H1 (cell line): ENCODE measurements at regions of chr5 and their contacts with region 1.

Region 1: GRCh38 chr5:172059661-172060100 is 53.2 kb upstream of the FBXW11 start:
- DNase-seq: peak in 1 of 2 experiments; percentile 64
- H3K4me3 ChIP-seq: no peak overlapping the region
- H3K27ac ChIP-seq: no peak overlapping the region
- H3K4me1 ChIP-seq: peaks cover 0 to 5% (median 0%) of the 10 kb centered on the region in 4 experiments; a peak in 4 of 7 replicates
- H3K27me3 ChIP-seq: no peaks in the 10 kb centered on the region
- CTCF ChIP-seq: peak; percentile 34 to 77 (median 71)
- EP300 ChIP-seq: no peak
- POLR2A ChIP-seq: no peak
- RAD21 ChIP-seq: peak; percentile 91 to 93

Region 2: GRCh38 chr5:171676286-171676944 is 383.3 kb before region 1 on chr5:
- CTCF ChIA-PET with region 1: no interaction called
- POLR2A ChIA-PET with region 1: no interaction called
- DNase-seq: peak in 1 of 2 experiments; percentile 17
- H3K4me3 ChIP-seq: no peak overlapping the region
- H3K27ac ChIP-seq: no peak overlapping the region
- H3K4me1 ChIP-seq: no peaks in the 10 kb centered on the region; a peak in 1 of 7 replicates
- H3K27me3 ChIP-seq: peaks cover 0 to 3% (median under 1%) of the 10 kb centered on the region in 4 experiments; a peak in 1 of 7 replicates
- CTCF ChIP-seq: no peak
- EP300 ChIP-seq: no peak
- POLR2A ChIP-seq: no peak
- RAD21 ChIP-seq: no peak

Region 3: DNA sequence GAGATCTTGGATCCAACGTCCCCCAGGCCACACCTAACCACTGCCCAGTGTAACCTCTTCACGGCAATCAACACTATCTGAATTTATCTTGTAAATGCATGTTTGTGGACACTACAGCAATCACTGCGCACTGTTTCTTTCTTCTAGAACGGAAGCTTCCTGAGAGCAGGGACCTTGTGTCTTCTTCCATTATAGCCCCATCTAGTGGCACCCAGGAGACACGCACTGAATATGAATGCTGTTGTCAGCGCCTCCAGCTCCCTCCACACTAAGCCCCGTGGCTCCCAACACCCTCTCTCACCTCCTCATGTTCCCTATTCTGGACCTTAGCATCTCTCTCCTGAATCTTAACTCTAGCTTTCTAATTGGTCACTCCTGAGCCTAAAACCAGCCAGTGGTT is 201.4 kb before region 1 on chr5:
- CTCF ChIA-PET with region 1: interaction called, 23 read pairs
- POLR2A ChIA-PET with region 1: no interaction called
- DNase-seq: no peak
- H3K4me3 ChIP-seq: no peak overlapping the region
- H3K27ac ChIP-seq: no peak overlapping the region
- H3K4me1 ChIP-seq: peaks cover 0 to 5% (median 2%) of the 10 kb centered on the region in 4 experiments; a peak in 5 of 7 replicates
- H3K27me3 ChIP-seq: no peaks in the 10 kb centered on the region
- CTCF ChIP-seq: peak; percentile 64 to 89 (median 73)
- EP300 ChIP-seq: no peak
- POLR2A ChIP-seq: peak in 1 of 2 experiments; percentile 10; a peak in 1 of 3 replicates
- RAD21 ChIP-seq: peak; percentile 69 to 70

Region 4: DNA sequence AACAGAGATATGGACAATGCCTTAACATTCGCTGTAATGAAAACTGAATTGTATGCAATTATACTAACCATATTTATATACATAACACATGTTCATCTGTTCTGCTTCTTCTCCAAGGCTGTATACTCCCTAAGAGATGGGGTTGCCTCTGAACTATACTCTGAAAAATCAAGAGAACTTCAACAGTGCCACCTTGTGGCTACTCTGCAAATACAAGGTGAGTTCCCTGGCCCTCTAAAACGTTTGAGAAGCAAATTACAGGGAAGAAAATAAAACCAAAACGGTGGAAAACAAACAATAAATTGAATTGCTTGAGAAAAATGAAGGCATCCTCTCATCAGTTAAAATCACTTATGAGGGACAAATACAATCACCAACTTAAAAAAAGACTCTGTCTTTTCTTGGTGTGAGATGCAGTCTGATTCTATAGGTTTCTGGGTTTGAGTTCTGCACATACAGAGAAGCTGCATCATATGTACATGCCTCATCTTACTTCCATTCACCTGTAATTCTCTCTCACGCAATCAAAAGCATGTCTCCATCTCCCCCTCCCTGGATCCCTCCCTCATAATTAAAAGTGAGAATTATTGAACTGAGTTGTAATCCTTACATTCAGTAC is 151.8 kb before region 1 on chr5:
- CTCF ChIA-PET with region 1: interaction called, 40 read pairs
- POLR2A ChIA-PET with region 1: no interaction called
- DNase-seq: no peak
- H3K4me3 ChIP-seq: no peak overlapping the region
- H3K27ac ChIP-seq: no peak overlapping the region
- H3K4me1 ChIP-seq: peaks cover 0 to 4% (median 2%) of the 10 kb centered on the region in 4 experiments; a peak in 3 of 7 replicates
- H3K27me3 ChIP-seq: no peaks in the 10 kb centered on the region
- CTCF ChIP-seq: peak in 2 of 3 experiments; percentile 60 to 73; a peak in 3 of 4 replicates
- EP300 ChIP-seq: no peak
- POLR2A ChIP-seq: no peak
- RAD21 ChIP-seq: peak; percentile 67 to 74

Region 5: GRCh38 chr5:172044631-172045314 is 14.9 kb before region 1 on chr5:
- CTCF ChIA-PET with region 1: interaction called, 51 read pairs
- POLR2A ChIA-PET with region 1: interaction called, 4 read pairs
- DNase-seq: no peak
- H3K4me3 ChIP-seq: no peak overlapping the region
- H3K27ac ChIP-seq: no peak overlapping the region
- H3K4me1 ChIP-seq: peaks cover 0 to 10% (median 0%) of the 10 kb centered on the region in 4 experiments; a peak in 5 of 7 replicates
- H3K27me3 ChIP-seq: no peaks in the 10 kb centered on the region
- CTCF ChIP-seq: peak; percentile 24 to 40 (median 31); a peak in 3 of 4 replicates
- EP300 ChIP-seq: no peak
- POLR2A ChIP-seq: no peak
- RAD21 ChIP-seq: peak; percentile 64 to 72

Region 6: DNA sequence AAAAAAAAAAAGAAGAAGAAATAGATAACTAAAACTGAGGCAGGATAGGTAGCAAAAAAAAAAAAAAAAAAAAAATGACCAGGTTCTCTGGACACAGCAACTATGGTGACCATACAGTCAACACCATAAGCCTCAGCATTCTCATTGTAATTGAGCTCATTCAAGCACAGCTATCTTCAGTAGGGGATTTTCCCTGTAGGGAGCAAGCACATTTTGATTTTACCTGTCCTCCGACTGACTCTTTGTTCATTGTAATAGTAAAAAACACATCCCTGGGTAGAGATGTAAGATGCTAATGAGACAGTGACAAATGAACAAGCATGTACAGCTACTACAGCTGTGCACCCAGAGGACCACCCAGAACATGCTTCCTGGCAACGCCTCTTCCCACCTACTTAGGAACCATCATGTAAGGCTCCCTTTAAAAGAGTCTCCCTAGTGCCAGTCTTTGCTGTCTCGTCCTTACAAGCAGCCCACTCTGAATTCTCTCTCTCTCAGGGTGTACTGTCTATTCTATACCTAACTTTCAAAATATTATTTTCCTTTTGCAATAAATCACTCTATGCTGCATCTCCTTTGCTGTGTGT is 11.7 kb after region 1 on chr5:
- CTCF ChIA-PET with region 1: interaction called, 14 read pairs
- POLR2A ChIA-PET with region 1: interaction called, 3 read pairs
- DNase-seq: no peak
- H3K4me3 ChIP-seq: no peak overlapping the region
- H3K27ac ChIP-seq: peak overlapping the region; percentile 41; the same call in 1 of the 2 replicates
- H3K4me1 ChIP-seq: peaks cover 0 to 5% (median 4%) of the 10 kb centered on the region in 4 experiments; a peak in 3 of 7 replicates
- H3K27me3 ChIP-seq: no peaks in the 10 kb centered on the region
- CTCF ChIP-seq: no peak
- EP300 ChIP-seq: peak in 1 of 2 experiments; percentile 48; a peak in 1 of 3 replicates
- POLR2A ChIP-seq: no peak
- RAD21 ChIP-seq: no peak

Region 7: GRCh38 chr5:172082059-172082579 is 22.4 kb after region 1 on chr5:
- CTCF ChIA-PET with region 1: interaction called, 13 read pairs
- POLR2A ChIA-PET with region 1: no interaction called
- DNase-seq: no peak
- H3K4me3 ChIP-seq: no peak overlapping the region
- H3K27ac ChIP-seq: no peak overlapping the region
- H3K4me1 ChIP-seq: peaks cover 0 to 5% (median 0%) of the 10 kb centered on the region in 4 experiments; a peak in 1 of 7 replicates
- H3K27me3 ChIP-seq: no peaks in the 10 kb centered on the region
- CTCF ChIP-seq: no peak
- EP300 ChIP-seq: no peak
- POLR2A ChIP-seq: no peak
- RAD21 ChIP-seq: no peak

Region 8: GRCh38 chr5:172097356-172097755 is 37.7 kb after region 1 on chr5:
- CTCF ChIA-PET with region 1: interaction called, 11 read pairs
- POLR2A ChIA-PET with region 1: no interaction called
- DNase-seq: no peak
- H3K4me3 ChIP-seq: no peak overlapping the region
- H3K27ac ChIP-seq: no peak overlapping the region
- H3K4me1 ChIP-seq: peaks cover 0 to 9% (median 5%) of the 10 kb centered on the region in 4 experiments; a peak in 4 of 7 replicates
- H3K27me3 ChIP-seq: no peaks in the 10 kb centered on the region
- CTCF ChIP-seq: no peak
- EP300 ChIP-seq: no peak
- POLR2A ChIP-seq: no peak
- RAD21 ChIP-seq: no peak